A673 (cell line): ENCODE measurements at regions of chr3 and their contacts with region 1.

Region 1: GRCh38 chr3:156674046-156674910 is at the start of gene TIPARP:
- DNase-seq: peak; percentile 99
- H3K4me3 ChIP-seq: peak within 1 kb of the TSS; percentile 89
- H3K27ac ChIP-seq: peak within 1 kb of the TSS; percentile 97
- H3K4me1 ChIP-seq: peaks cover 18% of the 10 kb centered on the region
- H3K27me3 ChIP-seq: no peaks in the 10 kb centered on the region
- CTCF ChIP-seq: peak; percentile 63
- total RNA-seq, gene TIPARP: 116 TPM in 2 replicates

Region 2: DNA sequence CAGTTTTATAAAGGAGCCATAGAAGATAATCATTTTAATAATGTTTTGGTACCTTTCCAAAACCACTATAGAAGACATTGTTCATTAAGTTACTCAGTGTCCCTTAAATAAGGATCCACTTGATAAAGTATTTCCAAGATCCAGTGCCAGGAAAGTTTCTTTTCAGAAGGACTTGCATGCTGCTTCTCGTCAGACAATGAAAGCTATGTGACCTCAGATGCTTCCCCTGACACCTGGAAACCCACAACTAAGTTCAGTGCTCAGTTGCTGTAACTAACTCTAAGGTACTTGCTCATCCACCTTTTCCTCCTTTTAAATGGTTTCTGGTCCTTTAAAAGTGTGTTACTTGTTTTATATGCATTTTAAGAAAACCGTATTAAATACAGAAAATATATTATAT is 126.6 kb before region 1 on chr3:
- CTCF ChIA-PET with region 1: no interaction called
- POLR2A ChIA-PET with region 1: no interaction called
- intact Hi-C with region 1: loop called (anchors 5 kb)
- DNase-seq: no peak
- H3K4me3 ChIP-seq: no peak overlapping the region
- H3K27ac ChIP-seq: peak overlapping the region; percentile 88
- H3K4me1 ChIP-seq: peaks cover 94% of the 10 kb centered on the region
- H3K27me3 ChIP-seq: no peaks in the 10 kb centered on the region
- CTCF ChIP-seq: no peak

Region 3: DNA sequence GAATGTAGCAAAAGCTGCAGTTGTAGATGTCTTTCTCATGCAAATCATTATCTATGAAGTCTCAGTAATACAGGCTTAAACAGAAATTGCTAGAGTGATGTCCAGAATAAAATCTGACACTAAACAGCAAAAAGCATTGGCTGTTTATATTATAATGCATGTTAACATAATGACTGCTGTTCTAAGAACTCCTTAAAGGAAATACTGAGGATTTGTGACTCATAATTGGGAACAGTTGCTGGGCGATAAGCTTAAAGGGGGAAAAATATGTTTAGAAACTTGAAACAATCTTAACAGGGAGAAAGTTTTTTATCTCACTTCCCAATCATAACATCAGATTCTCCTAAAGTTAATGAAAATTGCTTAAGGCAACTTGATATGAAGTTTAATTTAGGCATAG is 17.6 kb after region 1 on chr3:
- CTCF ChIA-PET with region 1: no interaction called
- POLR2A ChIA-PET with region 1: interaction called, 12 read pairs
- intact Hi-C with region 1: no loop called
- DNase-seq: peak; percentile 80
- H3K4me3 ChIP-seq: peak overlapping the region; percentile 27
- H3K27ac ChIP-seq: peak overlapping the region; percentile 70
- H3K4me1 ChIP-seq: peaks cover 90% of the 10 kb centered on the region
- H3K27me3 ChIP-seq: no peaks in the 10 kb centered on the region
- CTCF ChIP-seq: no peak